ENCODE measurements at regions of chr20 and their contacts with region 1.

Region 1: GRCh38 chr20:1776681-1777475 is 118.3 kb upstream of the SIRPA start:
- DNase-seq: peak; percentile 84
- H3K4me3 ChIP-seq: peak overlapping the region; percentile 93
- H3K27ac ChIP-seq: no peak overlapping the region
- H3K4me1 ChIP-seq: peaks cover 8% of the 10 kb centered on the region
- CTCF ChIP-seq: peak; percentile 88

Region 2: DNA sequence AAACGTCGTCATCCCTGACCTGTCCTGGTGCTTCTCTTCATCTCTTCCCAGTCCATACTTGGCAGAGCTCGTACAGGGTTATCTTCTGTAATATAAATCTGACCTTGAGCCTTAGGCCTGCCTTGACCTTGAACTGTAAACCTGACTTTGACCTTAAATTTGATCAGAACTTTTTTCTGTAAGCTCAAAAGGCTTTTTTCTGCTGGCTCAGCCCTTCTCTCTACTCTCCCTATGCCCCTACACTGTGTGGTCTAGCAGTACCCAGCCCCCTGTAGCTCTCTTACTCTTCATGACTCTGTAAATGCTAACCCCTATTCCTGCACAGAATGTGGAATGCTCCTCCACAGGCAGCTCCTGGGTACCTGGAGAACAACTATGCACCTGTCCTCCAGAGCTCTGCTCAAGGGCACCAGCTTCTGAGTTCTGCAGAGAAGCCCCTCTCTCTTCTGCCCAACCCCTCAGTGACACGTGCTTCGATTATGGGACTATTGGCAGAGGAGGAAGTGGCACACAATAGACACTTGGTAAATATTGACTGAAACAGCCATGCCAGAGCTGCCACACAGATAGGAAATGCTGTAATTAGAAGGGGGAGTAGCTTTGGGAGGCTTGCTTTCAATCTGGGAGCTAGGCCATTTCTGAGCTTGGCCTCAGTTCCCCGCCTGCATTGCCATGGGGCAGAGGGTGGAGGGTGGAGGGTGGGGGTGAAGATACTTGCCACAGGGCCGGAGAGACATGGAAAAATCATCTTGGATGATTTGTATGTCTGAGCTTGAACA is 495.4 kb before region 1 on chr20:
- CTCF ChIA-PET with region 1: no interaction called
- POLR2A ChIA-PET with region 1: no interaction called
- intact Hi-C with region 1: no loop called
- DNase-seq: no peak
- H3K4me3 ChIP-seq: no peak overlapping the region
- H3K27ac ChIP-seq: no peak overlapping the region
- H3K4me1 ChIP-seq: no peaks in the 10 kb centered on the region
- CTCF ChIP-seq: no peak

Region 3: GRCh38 chr20:1503564-1504227 is 273.2 kb before region 1 on chr20:
- CTCF ChIA-PET with region 1: no interaction called
- POLR2A ChIA-PET with region 1: no interaction called
- intact Hi-C with region 1: loop called (anchors 2 kb)
- DNase-seq: peak; percentile 86
- H3K4me3 ChIP-seq: no peak overlapping the region
- H3K27ac ChIP-seq: no peak overlapping the region
- H3K4me1 ChIP-seq: no peaks in the 10 kb centered on the region
- CTCF ChIP-seq: peak; percentile 100

Region 4: GRCh38 chr20:1509237-1509636 is 267.6 kb before region 1 on chr20:
- CTCF ChIA-PET with region 1: interaction called, 3 read pairs
- POLR2A ChIA-PET with region 1: no interaction called
- intact Hi-C with region 1: loop called (anchors 1 kb)
- DNase-seq: peak; percentile 22
- H3K4me3 ChIP-seq: no peak overlapping the region
- H3K27ac ChIP-seq: no peak overlapping the region
- H3K4me1 ChIP-seq: no peaks in the 10 kb centered on the region
- CTCF ChIP-seq: peak; percentile 66

Region 5: GRCh38 chr20:1535420-1536175 is 241.3 kb before region 1 on chr20:
- CTCF ChIA-PET with region 1: no interaction called
- POLR2A ChIA-PET with region 1: no interaction called
- intact Hi-C with region 1: loop called (anchors 1 kb)
- DNase-seq: peak; percentile 58
- H3K4me3 ChIP-seq: no peak overlapping the region
- H3K27ac ChIP-seq: no peak overlapping the region
- H3K4me1 ChIP-seq: peaks cover 7% of the 10 kb centered on the region
- CTCF ChIP-seq: no peak

Region 6: DNA sequence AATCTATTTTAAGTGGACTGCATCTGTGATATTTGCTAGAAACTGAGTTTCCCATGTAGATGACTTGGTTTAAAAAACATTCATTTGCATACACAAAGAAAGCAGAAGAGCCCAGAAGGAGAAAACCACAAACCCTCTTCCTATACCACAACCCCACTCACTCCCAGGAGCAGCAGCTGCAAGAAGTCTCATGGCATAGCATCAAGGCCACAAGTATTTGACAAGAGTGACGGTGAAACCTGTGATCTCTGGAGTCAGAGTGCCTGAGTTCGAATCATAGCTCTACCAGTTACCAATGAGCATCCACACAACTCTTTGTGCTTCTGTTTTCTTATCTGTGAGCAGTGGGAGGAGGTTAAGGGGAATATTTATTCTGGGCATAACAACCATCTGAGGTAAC is 74.5 kb before region 1 on chr20:
- CTCF ChIA-PET with region 1: no interaction called
- POLR2A ChIA-PET with region 1: no interaction called
- intact Hi-C with region 1: no loop called
- DNase-seq: no peak
- H3K4me3 ChIP-seq: no peak overlapping the region
- H3K27ac ChIP-seq: no peak overlapping the region
- H3K4me1 ChIP-seq: no peaks in the 10 kb centered on the region
- CTCF ChIP-seq: no peak

Region 7: DNA sequence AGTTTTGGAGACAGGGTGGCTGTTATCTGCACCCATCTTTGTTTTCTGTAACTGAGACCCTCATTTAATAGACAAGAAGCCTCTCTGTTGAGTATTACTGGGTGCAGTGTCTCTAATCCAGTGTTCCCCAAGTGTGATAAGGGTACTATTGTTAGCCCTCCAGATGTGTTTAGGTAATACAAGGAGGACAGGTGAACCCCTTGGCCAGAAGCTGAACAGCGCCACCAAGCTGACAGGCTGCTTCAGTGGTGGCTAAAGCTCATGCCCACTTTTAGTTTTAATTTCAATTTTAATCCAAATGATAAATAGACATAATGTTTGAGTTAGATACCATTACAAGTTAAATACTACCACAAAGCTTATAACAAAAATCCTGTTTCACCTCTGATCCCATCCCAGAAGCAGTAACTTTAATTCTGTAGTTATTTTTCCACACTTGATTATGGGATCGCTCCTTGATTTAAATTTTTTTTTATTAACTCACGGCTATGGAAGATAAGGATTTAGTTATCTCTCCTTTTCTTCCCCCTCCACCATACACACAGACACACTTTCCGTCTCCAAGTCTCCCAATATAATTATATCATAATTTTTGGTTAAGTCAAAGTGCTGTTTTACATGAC is 316.4 kb after region 1 on chr20:
- CTCF ChIA-PET with region 1: interaction called, 11 read pairs
- POLR2A ChIA-PET with region 1: interaction called, 3 read pairs
- intact Hi-C with region 1: no loop called
- DNase-seq: peak; percentile 58
- H3K4me3 ChIP-seq: no peak overlapping the region
- H3K27ac ChIP-seq: no peak overlapping the region
- H3K4me1 ChIP-seq: peaks cover 5% of the 10 kb centered on the region
- CTCF ChIP-seq: peak; percentile 89